ENCODE measurements at regions of chrX and their contacts with region 1.

Region 1: GRCh38 chrX:68828740-68829552 is at the start of gene EFNB1:
- DNase-seq: peak; percentile 90 to 92
- ATAC-seq: peak; percentile 90 to 97 (median 93)
- H3K4me3 ChIP-seq: peak within 1 kb of the TSS; percentile 47 to 90 (median 84)
- H3K27ac ChIP-seq: peak within 1 kb of the TSS; percentile 50 to 90 (median 87)
- H3K4me1 ChIP-seq: peaks cover 0 to 28% (median 10%) of the 10 kb centered on the region in 9 donors
- H3K27me3 ChIP-seq: peaks cover 0 to 63% (median 0%) of the 10 kb centered on the region in 7 donors
- CTCF ChIP-seq: no peak
- total RNA-seq, gene EFNB1: 10.8 to 45.1 (median 16.5) TPM

Region 2: DNA sequence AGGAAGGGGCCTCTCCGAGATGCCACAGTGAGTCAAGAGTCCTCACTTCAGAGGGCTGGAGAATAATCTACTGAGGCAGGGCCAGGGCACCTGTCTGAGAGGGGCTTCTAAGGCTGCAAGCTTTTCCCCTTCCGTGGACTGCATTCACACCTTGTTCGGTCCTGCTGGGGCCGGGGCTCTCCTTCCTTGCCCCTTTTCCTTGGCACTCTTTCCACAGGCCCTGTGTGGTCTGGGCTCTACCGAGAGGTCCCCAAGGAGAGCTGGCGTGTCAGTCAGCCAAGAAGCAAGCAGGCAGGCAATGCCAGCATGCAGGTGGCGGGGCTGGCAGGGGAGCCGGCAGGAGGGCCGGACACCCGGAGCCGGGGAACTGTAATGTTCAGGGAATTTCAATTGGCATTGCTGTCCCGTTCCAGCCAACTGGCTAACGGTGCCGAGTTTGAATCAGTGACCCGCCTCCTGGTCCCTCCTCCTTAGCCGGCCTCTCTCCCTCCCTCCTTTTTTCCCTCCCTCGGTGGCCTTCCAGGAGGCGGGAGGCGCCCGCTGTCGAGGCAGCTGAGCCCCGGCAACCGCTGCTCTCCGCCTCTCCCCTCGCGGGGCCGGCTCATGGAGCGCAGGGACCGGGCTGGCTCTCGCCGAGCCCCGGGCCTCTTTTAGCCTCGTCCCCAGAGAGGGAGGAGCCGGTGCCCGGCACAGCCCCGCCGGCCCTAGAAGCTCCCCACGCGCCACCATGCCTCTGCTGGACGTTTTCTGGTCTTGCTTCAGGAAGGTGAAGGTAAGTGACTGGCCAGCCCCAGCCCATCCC is 181.6 kb before region 1 on chrX and contains the start of gene STARD8:
- intact Hi-C with region 1: no loop called
- DNase-seq: peak; percentile 15 to 40
- ATAC-seq: peak; percentile 65 to 85 (median 71)
- H3K4me3 ChIP-seq: peak within 1 kb of the TSS; percentile 10 to 50 (median 42)
- H3K27ac ChIP-seq: peak within 1 kb of the TSS in 3 of 10 donors; percentile 9 to 40 (median 10)
- H3K4me1 ChIP-seq: peaks cover 0 to 9% (median 0%) of the 10 kb centered on the region in 9 donors
- H3K27me3 ChIP-seq: peaks cover 0 to 36% (median 0%) of the 10 kb centered on the region in 7 donors
- CTCF ChIP-seq: no peak
- total RNA-seq, gene STARD8: 5.2 to 11.7 (median 8.0) TPM

Region 3: GRCh38 chrX:68659385-68659784 is 169.6 kb before region 1 on chrX:
- intact Hi-C with region 1: no loop called
- DNase-seq: no peak
- ATAC-seq: peak in 7 of 8 donors; percentile 32 to 73 (median 39)
- H3K4me3 ChIP-seq: no peak overlapping the region
- H3K27ac ChIP-seq: no peak overlapping the region
- H3K4me1 ChIP-seq: peaks cover 0 to 12% (median 0%) of the 10 kb centered on the region in 9 donors
- H3K27me3 ChIP-seq: peaks cover 0 to 6% (median 0%) of the 10 kb centered on the region in 7 donors
- CTCF ChIP-seq: no peak

Region 4: DNA sequence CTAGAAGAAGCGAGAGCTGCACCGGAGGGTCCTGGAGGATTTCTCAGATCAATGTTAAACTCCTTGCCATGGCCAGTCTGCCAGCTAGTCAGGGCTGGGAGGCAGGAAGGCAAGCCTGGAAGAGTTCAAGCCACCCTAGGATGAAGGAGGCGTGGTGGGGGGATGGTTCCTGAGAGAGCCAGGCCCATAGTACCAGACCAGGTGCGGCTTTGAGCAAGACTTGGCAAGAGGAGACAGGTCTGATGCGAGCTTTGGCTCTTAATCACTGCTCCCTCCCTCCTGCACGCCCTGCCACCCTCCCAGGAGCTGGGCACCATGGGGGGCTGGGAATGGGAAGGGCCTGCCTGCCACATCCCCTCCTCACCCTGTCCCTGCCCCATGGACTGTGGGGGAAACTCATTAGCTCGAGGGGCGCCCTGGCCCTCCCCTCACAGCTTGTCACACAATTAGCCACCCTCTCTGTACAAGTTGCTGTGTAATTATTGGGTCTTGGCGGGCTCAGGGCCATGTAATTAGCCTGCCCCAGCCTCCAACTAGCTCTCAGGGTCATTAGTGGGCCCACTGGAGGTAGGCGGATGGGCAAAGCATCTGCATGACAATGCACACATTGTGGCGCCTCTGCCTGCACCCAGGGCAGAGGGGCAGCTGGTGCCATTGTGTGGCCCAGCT is 50.2 kb after region 1 on chrX:
- intact Hi-C with region 1: no loop called
- DNase-seq: no peak
- ATAC-seq: no peak
- H3K4me3 ChIP-seq: no peak overlapping the region
- H3K27ac ChIP-seq: no peak overlapping the region
- H3K4me1 ChIP-seq: no peaks in the 10 kb centered on the region
- H3K27me3 ChIP-seq: peaks cover 0 to 43% (median 0%) of the 10 kb centered on the region in 7 donors
- CTCF ChIP-seq: no peak

Region 5: GRCh38 chrX:68929332-68930150 is 100.6 kb after region 1 on chrX:
- intact Hi-C with region 1: loop called in 2 of 10 experiments (anchors 2 to 5 kb)
- DNase-seq: peak; percentile 29 to 46
- ATAC-seq: peak in 7 of 8 donors; percentile 56 to 79 (median 74)
- H3K4me3 ChIP-seq: no peak overlapping the region
- H3K27ac ChIP-seq: peak overlapping the region in 9 of 10 donors; percentile 14 to 83 (median 60)
- H3K4me1 ChIP-seq: peaks cover 0 to 53% (median 20%) of the 10 kb centered on the region in 9 donors
- H3K27me3 ChIP-seq: peaks cover 0 to 7% (median 0%) of the 10 kb centered on the region in 7 donors
- CTCF ChIP-seq: no peak

Region 6: GRCh38 chrX:68995780-68996551 is 167.0 kb after region 1 on chrX:
- intact Hi-C with region 1: loop called in 4 of 10 experiments (anchors 2 to 10 kb)
- DNase-seq: peak; percentile 66 to 73
- ATAC-seq: peak; percentile 81 to 94 (median 90)
- H3K4me3 ChIP-seq: peak overlapping the region in 6 of 10 donors; percentile 6 to 29 (median 18)
- H3K27ac ChIP-seq: peak overlapping the region; percentile 22 to 81 (median 77)
- H3K4me1 ChIP-seq: peaks cover 3 to 59% (median 29%) of the 10 kb centered on the region in 9 donors
- H3K27me3 ChIP-seq: peaks cover 0 to 12% (median 0%) of the 10 kb centered on the region in 7 donors
- CTCF ChIP-seq: no peak

Region 7: GRCh38 chrX:69158166-69158980 is 329.4 kb after region 1 on chrX:
- intact Hi-C with region 1: loop called in 1 of 10 experiments (anchors 10 kb)
- DNase-seq: peak; percentile 41 to 73
- ATAC-seq: peak; percentile 68 to 89 (median 82)
- H3K4me3 ChIP-seq: no peak overlapping the region
- H3K27ac ChIP-seq: no peak overlapping the region
- H3K4me1 ChIP-seq: peaks cover 0 to 16% (median 5%) of the 10 kb centered on the region in 9 donors
- H3K27me3 ChIP-seq: peaks cover 0 to 33% (median 0%) of the 10 kb centered on the region in 7 donors
- CTCF ChIP-seq: peak; percentile 18 to 66 (median 53)

Region 8: DNA sequence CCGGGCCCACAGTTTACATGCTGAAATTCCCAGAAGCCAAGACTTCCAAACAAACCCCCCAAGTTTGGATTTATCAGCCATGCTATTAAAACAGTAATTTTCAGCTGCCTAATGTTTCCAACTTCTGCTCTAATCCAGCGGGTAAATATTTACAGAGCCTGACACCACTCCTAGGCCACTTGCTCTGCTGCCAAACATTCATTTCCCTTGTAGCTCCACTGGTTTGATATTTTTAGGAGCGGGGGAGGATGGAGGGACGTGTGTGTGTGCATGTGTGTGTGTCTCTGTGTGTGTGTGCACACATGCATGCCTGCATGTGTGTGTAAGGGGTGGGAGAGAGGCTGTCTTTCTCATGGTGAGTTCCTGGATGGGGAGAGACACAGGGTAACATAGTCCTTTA is 452.0 kb after region 1 on chrX:
- intact Hi-C with region 1: loop called in 9 of 10 experiments (anchors 2 to 5 kb)
- DNase-seq: peak in 1 of 2 donors; percentile 37
- ATAC-seq: peak in 6 of 8 donors; percentile 29 to 77 (median 64)
- H3K4me3 ChIP-seq: no peak overlapping the region
- H3K27ac ChIP-seq: peak overlapping the region in 3 of 10 donors; percentile 28 to 52 (median 35)
- H3K4me1 ChIP-seq: peaks cover 0 to 17% (median 3%) of the 10 kb centered on the region in 9 donors
- H3K27me3 ChIP-seq: peaks cover 0 to 37% (median 0%) of the 10 kb centered on the region in 7 donors
- CTCF ChIP-seq: no peak